CD14-positive monocyte (primary cell): ENCODE measurements at regions of chr9 and their contacts with region 1.

Region 1: GRCh38 chr9:96854073-96854876 is at the start of gene ZNF782:
- DNase-seq: peak; percentile 80 to 89 (median 87)
- H3K4me3 ChIP-seq: peak within 1 kb of the TSS; percentile 85 to 97 (median 88)
- H3K4me3 Mint-ChIP-seq: peak within 1 kb of the TSS; percentile 100
- H3K27ac ChIP-seq: peak within 1 kb of the TSS in 1 of 2 donors; percentile 52
- H3K27ac Mint-ChIP-seq: peak within 1 kb of the TSS; percentile 86 to 98 (median 93)
- H3K4me1 ChIP-seq: peaks cover 17 to 20% of the 10 kb centered on the region in 2 donors
- H3K4me1 Mint-ChIP-seq: peaks cover 27% of the 10 kb centered on the region
- H3K27me3 ChIP-seq: peaks cover 3 to 6% of the 10 kb centered on the region in 2 donors
- H3K27me3 Mint-ChIP-seq: peaks cover 7 to 12% (median 10%) of the 10 kb centered on the region in 3 donors
- CTCF ChIP-seq: no peak
- polyA plus RNA-seq, gene ZNF782: 1.1 to 1.3 (median 1.1) TPM

Region 2: DNA sequence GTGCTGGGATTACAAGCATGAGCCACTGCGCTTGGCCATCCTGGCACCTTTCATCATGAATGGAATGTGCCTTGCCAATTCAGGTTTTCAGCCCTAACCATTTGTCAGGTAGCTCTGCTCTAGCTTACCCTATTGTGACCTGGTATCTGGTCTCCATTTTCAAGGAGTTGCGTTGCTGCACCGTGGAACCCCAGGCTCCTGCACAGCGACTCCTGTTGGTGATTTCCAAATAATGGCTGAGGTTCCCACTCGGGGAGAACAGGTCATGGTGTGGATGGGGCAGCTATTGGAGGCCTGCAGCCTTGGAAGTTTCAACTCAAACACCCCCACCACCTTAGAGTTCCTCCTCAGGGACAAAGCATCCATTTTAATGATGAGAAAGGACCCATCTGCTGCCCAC is 203.4 kb after region 1 on chr9:
- intact Hi-C with region 1: no loop called
- DNase-seq: no peak
- H3K4me3 ChIP-seq: no peak overlapping the region
- H3K4me3 Mint-ChIP-seq: no peak overlapping the region
- H3K27ac ChIP-seq: no peak overlapping the region
- H3K27ac Mint-ChIP-seq: no peak overlapping the region
- H3K4me1 ChIP-seq: no peaks in the 10 kb centered on the region
- H3K4me1 Mint-ChIP-seq: no peaks in the 10 kb centered on the region
- H3K27me3 ChIP-seq: peaks cover 0 to 15% of the 10 kb centered on the region in 2 donors
- H3K27me3 Mint-ChIP-seq: peaks cover 16 to 27% (median 18%) of the 10 kb centered on the region in 3 donors
- CTCF ChIP-seq: no peak

Region 3: DNA sequence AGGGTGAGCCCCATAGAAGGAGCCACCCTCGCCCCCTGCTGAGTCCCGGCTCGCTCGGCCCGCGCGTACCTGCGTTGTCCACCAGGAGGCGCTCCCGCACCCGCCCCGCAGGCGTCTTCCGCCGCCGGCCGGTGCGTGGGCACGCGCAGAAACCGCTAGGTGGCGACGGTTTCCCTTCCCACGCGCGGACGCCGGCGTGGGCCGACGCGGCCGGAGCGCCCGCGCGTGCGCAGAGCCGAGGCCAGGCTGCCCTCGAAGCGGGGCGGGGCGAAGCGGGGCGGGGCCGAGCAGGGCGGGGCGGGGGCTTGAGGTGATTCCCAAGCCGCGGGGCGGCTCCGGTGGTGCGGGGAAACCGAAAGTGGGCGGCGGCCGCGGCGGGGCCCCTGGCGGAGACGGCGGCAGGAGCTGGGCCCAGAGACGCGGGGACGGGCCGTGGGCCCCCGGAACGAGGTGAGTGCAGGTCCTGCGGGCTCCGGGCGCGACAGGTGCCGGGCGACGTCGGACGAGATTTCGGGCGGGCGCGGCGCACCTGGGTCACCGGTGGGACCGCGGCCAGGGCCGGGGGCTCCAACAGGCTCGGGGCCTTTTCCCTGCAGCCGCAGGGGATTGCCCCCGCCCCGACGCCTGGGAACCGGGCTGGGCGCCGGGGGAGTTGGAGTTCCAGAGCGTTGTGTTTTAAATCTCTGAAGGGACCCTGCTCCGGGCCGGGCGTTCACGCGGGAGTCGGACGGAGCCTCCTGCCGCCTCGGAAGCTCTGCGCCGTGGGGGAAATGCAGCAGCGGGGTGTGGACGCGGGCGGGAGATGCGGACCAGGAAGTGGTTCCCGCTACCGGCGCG is 557.7 kb after region 1 on chr9 and contains the start of gene TDRD7:
- intact Hi-C with region 1: loop called in 1 of 2 experiments (anchors 5 kb)
- DNase-seq: peak; percentile 89 to 92 (median 89)
- H3K4me3 ChIP-seq: peak within 1 kb of the TSS; percentile 83 to 94 (median 87)
- H3K4me3 Mint-ChIP-seq: peak within 1 kb of the TSS; percentile 88 to 90
- H3K27ac ChIP-seq: peak within 1 kb of the TSS; percentile 83 to 85
- H3K27ac Mint-ChIP-seq: peak within 1 kb of the TSS; percentile 76 to 94 (median 85)
- H3K4me1 ChIP-seq: peaks cover 27 to 35% of the 10 kb centered on the region in 2 donors
- H3K4me1 Mint-ChIP-seq: peaks cover 50% of the 10 kb centered on the region
- H3K27me3 ChIP-seq: no peaks in the 10 kb centered on the region
- H3K27me3 Mint-ChIP-seq: peaks cover 0 to 2% (median 0%) of the 10 kb centered on the region in 3 donors
- CTCF ChIP-seq: peak; percentile 100
- polyA plus RNA-seq, gene TDRD7: 8.1 to 12.0 (median 11.1) TPM